ENCODE measurements at regions of chr22 and their contacts with region 1.

Region 1: DNA sequence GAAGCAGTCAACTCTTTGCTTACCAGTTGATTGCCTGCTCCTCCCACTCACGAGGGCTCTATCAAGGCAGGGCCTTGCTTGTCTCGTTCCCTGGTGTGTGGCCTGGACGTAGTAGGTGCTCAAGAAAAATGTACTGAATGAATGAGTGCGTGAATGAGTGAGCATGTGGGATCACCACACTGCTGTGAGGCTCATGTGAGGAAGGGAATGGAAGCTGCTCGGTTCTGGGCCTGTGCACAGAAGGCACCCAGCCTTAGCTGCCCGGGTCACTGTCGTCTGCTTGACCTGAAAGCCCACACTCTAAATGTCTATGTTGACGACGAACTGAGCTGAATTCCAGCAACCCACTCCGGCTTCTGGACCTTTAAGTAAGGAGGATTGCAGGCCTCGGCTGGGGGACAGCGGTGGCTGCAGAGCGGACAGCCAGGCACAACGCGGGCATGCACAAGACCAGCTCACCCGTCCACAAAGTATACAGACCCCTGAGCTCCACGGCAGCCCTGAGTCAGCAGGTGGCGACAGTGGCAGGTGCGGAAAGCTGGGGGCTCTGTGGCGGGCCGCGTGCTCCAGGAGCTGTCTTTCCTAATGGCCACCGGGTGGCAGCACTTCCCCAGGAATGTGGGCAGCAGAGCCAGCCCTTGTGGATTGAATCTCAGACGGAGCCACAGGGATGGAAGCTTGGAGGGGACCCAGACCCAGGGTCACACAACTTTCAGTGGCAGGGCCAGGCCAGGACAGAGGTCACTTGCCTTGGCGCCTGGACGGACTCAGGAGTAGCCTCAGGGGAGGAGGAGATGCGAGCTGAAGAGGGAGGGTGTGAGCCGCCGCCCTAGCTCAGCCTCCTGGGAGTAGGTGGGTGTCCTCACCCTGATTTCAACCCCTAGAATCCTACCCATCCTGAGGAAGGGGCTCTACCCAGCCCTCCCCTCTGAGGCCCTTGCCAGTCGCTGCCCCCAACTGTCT is 5.0 kb upstream of the PICK1 start:
- DNase-seq: peak; percentile 66 to 86 (median 72)
- H3K4me3 ChIP-seq: no peak overlapping the region
- H3K4me3 Mint-ChIP-seq: peak overlapping the region in 1 of 7 donors; percentile 77
- H3K27ac ChIP-seq: no peak overlapping the region
- H3K27ac Mint-ChIP-seq: peak overlapping the region in 2 of 8 donors; percentile 58 to 80
- H3K4me1 ChIP-seq: peaks cover 10% of the 10 kb centered on the region
- H3K4me1 Mint-ChIP-seq: peaks cover 10 to 14% (median 12%) of the 10 kb centered on the region in 3 donors
- H3K27me3 ChIP-seq: no peaks in the 10 kb centered on the region
- H3K27me3 Mint-ChIP-seq: peaks cover 3 to 7% of the 10 kb centered on the region in 2 donors

Region 2: GRCh38 chr22:38034274-38034882 is 17.8 kb before region 1 on chr22:
- CTCF ChIA-PET with region 1: interaction called, 17 read pairs
- POLR2A ChIA-PET with region 1: no interaction called
- DNase-seq: no peak
- H3K4me3 ChIP-seq: no peak overlapping the region
- H3K4me3 Mint-ChIP-seq: no peak overlapping the region
- H3K27ac ChIP-seq: peak overlapping the region; percentile 54
- H3K27ac Mint-ChIP-seq: no peak overlapping the region
- H3K4me1 ChIP-seq: no peaks in the 10 kb centered on the region
- H3K4me1 Mint-ChIP-seq: peaks cover 0 to 2% (median 0%) of the 10 kb centered on the region in 3 donors
- H3K27me3 ChIP-seq: no peaks in the 10 kb centered on the region
- H3K27me3 Mint-ChIP-seq: no peaks in the 10 kb centered on the region

Region 3: GRCh38 chr22:38062791-38063190 is 10.6 kb after region 1 on chr22:
- CTCF ChIA-PET with region 1: interaction called, 18 read pairs
- POLR2A ChIA-PET with region 1: no interaction called
- DNase-seq: no peak
- H3K4me3 ChIP-seq: no peak overlapping the region
- H3K4me3 Mint-ChIP-seq: no peak overlapping the region
- H3K27ac ChIP-seq: no peak overlapping the region
- H3K27ac Mint-ChIP-seq: peak overlapping the region in 4 of 8 donors; percentile 19 to 67 (median 38)
- H3K4me1 ChIP-seq: peaks cover 5% of the 10 kb centered on the region
- H3K4me1 Mint-ChIP-seq: peaks cover 7 to 16% (median 11%) of the 10 kb centered on the region in 3 donors
- H3K27me3 ChIP-seq: no peaks in the 10 kb centered on the region
- H3K27me3 Mint-ChIP-seq: no peaks in the 10 kb centered on the region

Region 4: GRCh38 chr22:38069372-38070249 is 17.4 kb after region 1 on chr22:
- CTCF ChIA-PET with region 1: interaction called, 18 read pairs
- POLR2A ChIA-PET with region 1: no interaction called
- DNase-seq: no peak
- H3K4me3 ChIP-seq: no peak overlapping the region
- H3K4me3 Mint-ChIP-seq: no peak overlapping the region
- H3K27ac ChIP-seq: no peak overlapping the region
- H3K27ac Mint-ChIP-seq: peak overlapping the region in 1 of 8 donors; percentile 71
- H3K4me1 ChIP-seq: no peaks in the 10 kb centered on the region
- H3K4me1 Mint-ChIP-seq: no peaks in the 10 kb centered on the region
- H3K27me3 ChIP-seq: no peaks in the 10 kb centered on the region
- H3K27me3 Mint-ChIP-seq: no peaks in the 10 kb centered on the region

Region 5: GRCh38 chr22:38230108-38230825 is 178.1 kb after region 1 on chr22:
- CTCF ChIA-PET with region 1: interaction called, 20 read pairs
- POLR2A ChIA-PET with region 1: no interaction called
- DNase-seq: peak in 4 of 5 donors; percentile 25 to 68 (median 35)
- H3K4me3 ChIP-seq: no peak overlapping the region
- H3K4me3 Mint-ChIP-seq: no peak overlapping the region
- H3K27ac ChIP-seq: no peak overlapping the region
- H3K27ac Mint-ChIP-seq: peak overlapping the region in 3 of 8 donors; percentile 19 to 72 (median 35)
- H3K4me1 ChIP-seq: no peaks in the 10 kb centered on the region
- H3K4me1 Mint-ChIP-seq: peaks cover 0 to 11% (median 4%) of the 10 kb centered on the region in 3 donors
- H3K27me3 ChIP-seq: no peaks in the 10 kb centered on the region
- H3K27me3 Mint-ChIP-seq: no peaks in the 10 kb centered on the region